ENCODE measurements at regions of chr15 and their contacts with region 1.

Region 1: DNA sequence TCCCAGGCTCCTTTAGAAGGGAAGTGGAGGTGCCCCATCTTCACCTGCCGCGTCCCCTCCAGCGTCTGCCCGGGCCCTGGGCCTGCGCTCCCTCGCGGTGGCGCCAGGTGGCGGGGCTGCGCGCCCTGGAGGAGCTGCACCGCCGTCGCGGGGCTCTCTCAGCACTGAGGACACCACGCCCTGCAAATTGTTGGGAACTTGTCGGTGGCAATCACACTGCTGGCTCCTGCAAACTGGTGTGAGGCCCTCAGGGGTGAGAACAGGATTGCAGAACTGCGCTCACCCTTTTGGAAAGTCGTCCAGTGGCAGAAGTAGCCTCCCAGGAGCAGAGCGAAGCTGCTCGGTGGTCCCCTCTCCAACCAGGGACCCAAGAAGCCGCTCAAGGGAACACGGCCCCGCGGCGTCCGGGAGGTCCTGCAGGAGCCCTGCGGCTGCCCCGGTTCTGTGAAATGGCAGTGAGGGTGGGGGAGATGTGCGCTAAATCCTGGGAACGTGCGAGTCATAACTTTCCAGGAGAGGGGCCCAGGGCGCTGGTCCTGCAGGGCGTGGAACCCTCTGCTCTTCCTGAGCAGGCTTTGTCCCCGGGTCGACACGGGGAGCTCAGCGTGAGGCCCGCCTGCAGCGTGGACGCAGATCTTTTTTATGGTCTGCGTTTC is 995 bp upstream of the LRRK1 start:
- DNase-seq: peak; percentile 76
- H3K4me3 Mint-ChIP-seq: peak overlapping the region; percentile 67
- H3K27ac Mint-ChIP-seq: no peak overlapping the region
- H3K4me1 Mint-ChIP-seq: peaks cover 17% of the 10 kb centered on the region
- H3K27me3 Mint-ChIP-seq: peaks cover 45% of the 10 kb centered on the region

Region 2: GRCh38 chr15:100627789-100628395 is 290.3 kb before region 1 on chr15:
- CTCF ChIA-PET with region 1: interaction called, 4 read pairs
- POLR2A ChIA-PET with region 1: no interaction called
- intact Hi-C with region 1: loop called (anchors 5 kb)
- DNase-seq: peak; percentile 69
- H3K4me3 Mint-ChIP-seq: no peak overlapping the region
- H3K27ac Mint-ChIP-seq: no peak overlapping the region
- H3K4me1 Mint-ChIP-seq: peaks cover 8% of the 10 kb centered on the region
- H3K27me3 Mint-ChIP-seq: no peaks in the 10 kb centered on the region

Region 3: GRCh38 chr15:100958326-100959065 is 40.3 kb after region 1 on chr15:
- CTCF ChIA-PET with region 1: no interaction called
- POLR2A ChIA-PET with region 1: no interaction called
- intact Hi-C with region 1: no loop called
- DNase-seq: no peak
- H3K4me3 Mint-ChIP-seq: no peak overlapping the region
- H3K27ac Mint-ChIP-seq: no peak overlapping the region
- H3K4me1 Mint-ChIP-seq: no peaks in the 10 kb centered on the region
- H3K27me3 Mint-ChIP-seq: peaks cover 17% of the 10 kb centered on the region

Region 4: GRCh38 chr15:101000271-101000681 is 82.1 kb after region 1 on chr15:
- CTCF ChIA-PET with region 1: interaction called, 21 read pairs
- POLR2A ChIA-PET with region 1: no interaction called
- intact Hi-C with region 1: no loop called
- DNase-seq: no peak
- H3K4me3 Mint-ChIP-seq: no peak overlapping the region
- H3K27ac Mint-ChIP-seq: no peak overlapping the region
- H3K4me1 Mint-ChIP-seq: no peaks in the 10 kb centered on the region
- H3K27me3 Mint-ChIP-seq: peaks cover 3% of the 10 kb centered on the region